ENCODE measurements at regions of chr19 and their contacts with region 1.

Region 1: DNA sequence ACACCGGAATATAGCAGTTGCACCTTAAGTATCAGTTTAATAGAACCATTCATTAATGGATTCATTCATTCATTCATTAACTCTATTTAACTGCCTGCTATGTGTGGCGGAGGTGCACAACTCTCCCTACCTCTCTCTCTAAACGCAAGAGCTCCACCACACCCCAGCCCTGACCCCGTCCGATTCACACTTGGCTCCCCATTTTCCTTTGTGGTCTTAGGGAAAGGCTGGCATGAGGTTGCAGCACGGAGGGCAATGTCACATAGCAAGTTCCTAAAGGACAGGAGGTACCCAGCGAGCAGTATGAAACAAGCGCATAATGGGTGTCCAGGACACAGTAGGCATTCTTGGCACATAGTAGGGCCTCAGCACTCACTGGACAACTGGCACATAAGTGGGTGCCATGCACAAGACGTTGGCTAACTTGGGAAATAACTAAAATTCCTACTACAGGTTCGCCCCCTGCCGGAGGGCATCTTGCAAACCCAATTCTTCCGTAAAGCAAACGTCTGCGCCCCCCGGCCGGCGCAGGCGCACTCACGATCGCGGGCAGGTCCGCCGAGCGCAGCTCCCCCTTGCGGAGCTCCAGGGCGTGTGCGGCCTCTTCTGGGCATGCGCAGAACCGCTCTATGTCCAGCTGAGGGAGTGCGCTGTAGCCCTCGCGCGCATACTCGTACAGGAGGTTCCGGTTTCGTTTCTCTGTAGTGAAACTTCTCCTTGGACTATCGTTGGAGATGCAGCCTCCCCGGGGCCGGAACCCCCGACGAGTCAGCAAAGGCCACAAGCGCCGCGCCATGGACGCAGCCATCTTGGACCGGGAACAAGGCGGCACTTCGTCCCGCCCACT is at the start of gene SARS2:
- DNase-seq: peak; percentile 59
- H3K4me3 ChIP-seq: peak within 1 kb of the TSS; percentile 97
- CTCF ChIP-seq: peak; percentile 97

Region 2: GRCh38 chr19:38402967-38403861 is 526.9 kb before region 1 on chr19 and contains the start of gene FAM98C:
- CTCF ChIA-PET with region 1: interaction called, 50 read pairs
- POLR2A ChIA-PET with region 1: no interaction called
- DNase-seq: peak; percentile 46
- H3K4me3 ChIP-seq: peak within 1 kb of the TSS; percentile 95
- CTCF ChIP-seq: peak; percentile 90

Region 3: DNA sequence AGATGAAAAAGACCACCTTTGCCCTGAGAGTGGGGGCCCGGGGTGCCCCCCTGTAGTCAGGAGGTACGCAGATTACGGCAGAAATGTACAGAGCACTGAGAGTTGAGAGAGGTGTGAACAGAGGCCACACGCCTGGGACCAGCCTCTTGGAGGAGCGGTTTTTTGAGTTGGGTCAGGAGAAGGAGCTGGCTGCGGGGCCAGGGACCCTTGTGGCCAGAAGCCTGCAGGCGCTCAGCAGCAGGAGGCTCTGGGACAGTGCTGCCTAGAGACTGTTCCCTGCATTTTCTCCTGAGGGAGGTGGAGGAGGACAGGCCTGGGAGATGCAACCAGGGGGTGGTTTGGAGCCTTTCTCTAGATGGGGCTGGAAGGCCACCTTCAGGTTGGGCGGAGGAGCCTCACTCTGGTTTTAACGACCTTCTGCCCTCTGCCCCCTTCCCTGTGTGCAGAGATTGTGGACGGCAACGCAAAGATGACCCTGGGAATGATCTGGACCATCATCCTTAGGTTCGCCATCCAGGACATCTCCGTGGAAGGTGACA is 225.6 kb before region 1 on chr19:
- CTCF ChIA-PET with region 1: no interaction called
- POLR2A ChIA-PET with region 1: no interaction called
- DNase-seq: no peak
- H3K4me3 ChIP-seq: no peak overlapping the region
- CTCF ChIP-seq: no peak

Region 4: GRCh38 chr19:38759590-38760003 is 170.6 kb before region 1 on chr19:
- CTCF ChIA-PET with region 1: no interaction called
- POLR2A ChIA-PET with region 1: no interaction called
- DNase-seq: no peak
- H3K4me3 ChIP-seq: no peak overlapping the region
- CTCF ChIP-seq: no peak

Region 5: GRCh38 chr19:38769635-38770211 is 160.4 kb before region 1 on chr19:
- CTCF ChIA-PET with region 1: interaction called, 13 read pairs
- POLR2A ChIA-PET with region 1: no interaction called
- DNase-seq: no peak
- H3K4me3 ChIP-seq: peak overlapping the region; percentile 18; the same call in 1 of the 2 replicates
- CTCF ChIP-seq: peak; percentile 81

Region 6: GRCh38 chr19:38841787-38842438 is 88.2 kb before region 1 on chr19:
- CTCF ChIA-PET with region 1: no interaction called
- POLR2A ChIA-PET with region 1: no interaction called
- DNase-seq: no peak
- H3K4me3 ChIP-seq: no peak overlapping the region
- CTCF ChIP-seq: no peak

Region 7: DNA sequence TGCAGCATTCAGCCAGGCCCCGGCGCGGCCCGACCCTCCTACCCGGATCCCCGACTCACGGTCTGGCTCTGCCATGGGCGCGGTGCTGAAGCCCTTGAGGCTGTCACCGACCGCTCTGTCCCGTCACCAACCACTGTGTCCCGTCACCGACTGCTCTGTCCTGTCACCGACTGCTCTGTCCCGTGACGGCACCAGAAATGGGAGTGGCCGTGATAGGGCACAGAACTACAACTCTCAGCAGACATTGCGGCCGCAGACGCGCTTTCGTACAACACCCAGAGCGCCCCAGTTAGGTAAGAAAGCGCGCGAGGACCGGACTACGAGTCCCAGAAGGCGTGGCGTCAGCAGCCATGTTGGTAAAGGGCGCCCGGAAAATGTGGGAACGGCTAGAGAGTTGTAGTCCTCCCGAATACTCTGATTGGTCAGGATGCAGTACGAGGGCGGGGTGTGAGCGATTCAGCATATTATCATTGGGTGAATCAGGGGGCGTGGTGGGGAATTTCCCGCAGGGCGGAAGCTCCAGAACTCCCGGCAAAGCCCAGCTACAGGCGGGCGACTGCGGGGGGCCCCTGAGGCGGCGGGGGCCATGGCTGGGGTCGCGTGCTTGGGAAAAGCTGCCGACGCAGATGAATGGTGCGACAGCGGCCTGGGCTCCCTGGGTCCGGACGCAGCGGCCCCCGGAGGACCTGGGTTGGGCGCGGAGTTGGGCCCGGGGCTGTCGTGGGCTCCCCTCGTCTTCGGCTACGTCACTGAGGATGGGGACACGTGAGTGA is 30.5 kb before region 1 on chr19 and contains the starts of genes NFKBIB and SIRT2:
- CTCF ChIA-PET with region 1: interaction called, 53 read pairs
- POLR2A ChIA-PET with region 1: no interaction called
- DNase-seq: peak; percentile 97
- H3K4me3 ChIP-seq: peak within 1 kb of the TSS; percentile 91
- CTCF ChIP-seq: no peak

Region 8: DNA sequence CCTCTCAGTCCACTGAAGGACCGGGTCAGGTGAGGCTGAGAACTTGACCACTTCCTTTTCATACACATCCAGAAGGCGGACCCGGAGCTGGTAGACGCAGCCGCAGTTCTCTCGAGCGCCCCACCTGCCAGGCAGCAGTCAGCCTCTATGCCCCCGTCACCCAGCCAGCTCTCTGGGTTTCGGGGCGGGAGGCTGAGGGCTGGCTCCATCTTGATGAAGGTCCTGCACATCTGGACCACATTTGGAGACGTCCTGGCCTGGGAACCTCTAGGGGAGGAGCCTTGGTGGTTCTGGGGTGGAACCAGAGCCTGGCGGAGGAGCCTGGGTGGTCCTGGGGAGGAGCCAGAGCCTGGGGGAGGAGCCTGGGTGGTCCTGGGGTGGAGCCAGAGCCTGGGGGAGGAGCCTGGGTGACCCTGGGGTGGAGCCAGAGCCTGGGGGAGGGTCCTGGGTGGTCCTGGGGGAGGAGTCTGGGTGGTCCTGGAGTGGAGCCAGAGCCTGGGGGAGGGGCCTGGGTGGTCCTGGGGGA is 14.9 kb after region 1 on chr19:
- CTCF ChIA-PET with region 1: interaction called, 32 read pairs
- POLR2A ChIA-PET with region 1: no interaction called
- DNase-seq: no peak
- H3K4me3 ChIP-seq: no peak overlapping the region
- CTCF ChIP-seq: no peak